ENCODE measurements at regions of chr13 and their contacts with region 1.

Region 1: DNA sequence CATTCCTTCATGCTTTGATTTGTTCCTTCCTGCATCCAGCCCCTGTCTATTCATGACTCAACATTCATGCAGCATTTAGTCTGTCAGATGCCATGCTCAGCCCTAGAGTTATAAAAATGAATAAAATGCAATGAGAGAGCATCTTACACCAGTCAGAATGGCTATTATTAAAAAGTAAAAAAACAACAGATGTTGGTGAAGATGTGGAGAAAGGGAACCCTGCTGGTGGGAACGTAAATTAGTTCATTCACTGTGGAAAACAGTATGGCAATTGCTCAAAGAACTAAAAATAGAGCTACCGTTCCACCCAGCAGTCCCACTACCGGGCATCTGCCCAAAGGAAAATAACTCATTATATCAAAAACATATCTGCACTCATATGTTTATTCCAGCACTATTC is 70.0 kb upstream of the GTF3A start:
- DNase-seq: no peak
- ATAC-seq: peak in 1 of 2 donors; percentile 24

Region 2: DNA sequence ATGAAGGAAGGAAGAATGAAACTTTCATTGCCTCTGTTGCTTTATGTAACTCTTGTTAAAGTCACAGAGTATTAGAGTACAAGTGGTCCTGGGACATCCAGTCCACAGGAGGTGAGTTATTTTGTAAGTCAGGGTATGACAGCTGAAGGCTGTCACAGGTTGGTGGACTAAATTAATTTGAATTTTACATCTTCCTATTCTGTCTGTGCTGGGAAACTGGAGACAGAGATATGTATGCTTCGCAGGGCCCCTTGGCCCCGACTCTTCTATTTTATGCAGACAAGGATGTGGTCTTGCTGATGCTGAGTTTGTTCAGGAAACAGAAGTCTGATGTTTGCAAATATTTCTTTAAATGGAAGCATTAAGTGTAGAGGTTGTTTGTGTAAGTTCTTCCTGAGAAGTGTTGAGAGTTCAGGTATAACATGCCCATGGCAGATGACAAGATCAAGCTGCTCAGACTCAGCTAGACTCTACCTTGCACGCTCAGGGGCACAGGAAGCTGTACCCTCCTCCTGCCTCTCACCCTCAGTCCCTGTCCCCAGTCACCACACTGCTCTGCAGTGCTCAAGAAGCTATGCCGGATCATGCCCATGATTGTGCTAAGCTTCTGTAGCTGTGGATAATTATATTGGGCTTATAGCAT is 60.4 kb before region 1 on chr13:
- intact Hi-C with region 1: loop called in 1 of 2 experiments (anchors 2 kb)
- DNase-seq: no peak
- ATAC-seq: no peak

Region 3: GRCh38 chr13:27321468-27322431 is 32.6 kb before region 1 on chr13:
- intact Hi-C with region 1: no loop called
- DNase-seq: no peak
- ATAC-seq: no peak